BJ (cell line): ENCODE measurements at regions of chr12 and their contacts with region 1.

Region 1: GRCh38 chr12:63802012-63802608 is 22.4 kb downstream of the RXYLT1 start:
- DNase-seq: no peak
- H3K4me3 ChIP-seq: no peak overlapping the region
- H3K27me3 ChIP-seq: no peaks in the 10 kb centered on the region
- CTCF ChIP-seq: peak; percentile 61

Region 2: DNA sequence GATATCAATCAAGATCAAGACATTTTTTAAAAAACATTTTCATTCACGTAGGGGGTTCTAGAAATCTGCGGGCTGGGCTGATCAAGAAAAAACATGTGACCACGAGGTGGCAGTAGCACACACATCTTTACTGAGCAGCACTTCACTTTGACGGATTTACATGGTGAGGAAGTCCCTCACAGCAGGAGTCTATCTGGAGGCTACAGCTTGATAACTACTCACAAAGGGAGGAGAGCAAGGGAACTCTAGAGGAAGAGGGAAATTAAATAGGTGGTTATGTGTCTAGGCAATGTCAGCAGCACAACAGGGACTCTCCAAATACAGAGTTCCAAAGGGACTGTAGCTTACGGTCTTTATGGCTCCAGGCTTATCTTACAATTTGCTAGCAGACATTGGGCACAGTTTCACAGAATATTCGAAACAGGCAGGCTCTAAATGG is 381.9 kb before region 1 on chr12:
- CTCF ChIA-PET with region 1: interaction called, 17 read pairs
- POLR2A ChIA-PET with region 1: no interaction called
- DNase-seq: no peak
- H3K4me3 ChIP-seq: no peak overlapping the region
- H3K27me3 ChIP-seq: no peaks in the 10 kb centered on the region; the same call in 1 of the 2 replicates
- CTCF ChIP-seq: peak; percentile 65

Region 3: DNA sequence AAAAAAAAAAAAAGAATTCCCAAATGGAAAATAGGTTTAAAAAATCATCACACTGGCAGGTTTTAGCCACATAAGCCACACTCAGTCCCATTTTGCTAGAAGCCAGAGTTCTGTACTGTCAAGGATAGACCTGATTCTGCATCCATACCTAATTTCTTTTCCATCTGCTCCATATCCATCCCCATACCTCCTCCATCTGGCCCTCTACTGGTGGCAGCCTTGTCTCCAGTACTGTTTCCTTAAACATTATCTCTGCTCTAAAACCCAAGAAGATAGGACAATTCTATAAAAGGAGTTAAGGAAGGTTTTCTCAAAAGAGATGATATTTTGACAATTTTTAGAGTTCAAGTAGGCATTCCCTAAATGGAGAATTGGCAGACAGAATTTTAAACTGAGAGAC is 48.4 kb before region 1 on chr12:
- CTCF ChIA-PET with region 1: interaction called, 10 read pairs
- POLR2A ChIA-PET with region 1: no interaction called
- DNase-seq: no peak
- H3K4me3 ChIP-seq: no peak overlapping the region
- H3K27me3 ChIP-seq: peaks cover 4% of the 10 kb centered on the region; the same call in 1 of the 2 replicates
- CTCF ChIP-seq: peak; percentile 26

Region 4: DNA sequence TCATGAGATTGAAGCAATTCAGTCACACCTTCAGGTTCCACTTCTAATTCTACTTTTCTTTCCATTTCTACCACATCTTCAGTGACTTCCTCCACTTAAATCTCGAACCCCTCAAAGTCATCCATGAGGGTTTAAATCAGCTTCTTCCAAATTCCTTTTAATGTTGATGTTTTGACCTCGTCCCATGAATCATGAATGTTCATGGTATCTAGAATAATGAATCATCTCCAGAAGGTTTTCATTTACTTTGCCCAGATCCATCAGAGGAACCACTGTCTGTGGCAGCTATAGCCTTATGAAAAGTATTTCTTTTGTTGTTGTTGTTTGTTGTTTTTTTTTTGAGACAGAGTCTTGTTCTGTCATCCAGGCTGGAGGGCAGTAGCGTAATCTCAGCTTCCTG is 14.8 kb before region 1 on chr12:
- CTCF ChIA-PET with region 1: interaction called, 13 read pairs
- POLR2A ChIA-PET with region 1: no interaction called
- DNase-seq: peak; percentile 1
- H3K4me3 ChIP-seq: no peak overlapping the region
- H3K27me3 ChIP-seq: no peaks in the 10 kb centered on the region
- CTCF ChIP-seq: no peak